Heart left ventricle (tissue), 16 donors: ENCODE measurements at regions of chr5 and their contacts with region 1.

Region 1: DNA sequence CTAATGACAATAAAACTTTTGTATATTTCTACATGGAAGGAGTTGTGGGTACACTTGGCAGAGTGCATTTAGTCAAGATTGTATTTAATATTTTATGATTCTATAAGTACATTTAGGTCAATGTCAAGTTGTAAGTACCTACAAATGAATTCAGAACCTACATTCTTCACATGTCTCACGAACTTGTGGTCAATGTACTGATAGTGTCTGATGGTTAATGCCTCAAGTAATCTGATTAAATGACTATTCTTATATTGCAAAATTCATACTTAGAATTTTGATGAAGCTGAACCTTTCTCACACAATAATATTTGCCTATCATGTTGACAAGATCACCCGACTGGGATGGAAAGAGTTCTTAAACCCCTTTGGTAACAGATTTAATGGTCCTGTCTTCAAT is 444.5 kb downstream of the CTNND2 start:
- DNase-seq: no peak
- ATAC-seq: no peak
- H3K4me3 ChIP-seq: no peak overlapping the region
- H3K27ac ChIP-seq: no peak overlapping the region
- H3K4me1 ChIP-seq: no peaks in the 10 kb centered on the region
- H3K27me3 ChIP-seq: no peaks in the 10 kb centered on the region
- CTCF ChIP-seq: no peak
- POLR2A ChIP-seq: no peak

Region 2: DNA sequence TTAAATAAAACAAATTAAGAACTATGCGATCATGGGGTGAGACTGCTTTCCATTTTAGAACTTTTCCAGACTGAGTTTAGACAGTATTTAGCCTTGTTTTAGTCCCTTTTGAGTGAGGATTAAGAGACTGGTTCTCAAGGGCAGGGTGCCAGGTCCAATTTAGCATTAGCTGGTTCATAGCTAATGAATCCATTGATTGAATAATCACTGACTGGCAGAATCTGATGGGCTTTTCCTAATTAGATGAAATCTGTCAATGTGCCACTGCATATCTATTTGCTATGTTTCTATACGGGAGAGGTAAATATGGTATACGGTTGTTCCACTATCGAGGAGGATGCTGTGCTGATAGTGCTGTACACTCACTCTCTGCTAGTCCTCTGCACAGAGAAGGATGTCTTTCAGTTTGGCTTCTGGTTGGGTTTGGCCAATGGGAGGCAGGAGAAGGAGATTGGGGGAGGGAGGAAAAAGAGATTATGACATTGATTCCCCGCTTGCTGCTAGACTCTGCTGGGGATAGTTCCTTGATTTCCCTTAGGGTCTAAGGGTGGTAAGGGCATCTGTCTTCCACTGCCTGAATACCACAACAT is 52.1 kb before region 1 on chr5:
- intact Hi-C with region 1: no loop called
- DNase-seq: no peak
- ATAC-seq: no peak
- H3K4me3 ChIP-seq: no peak overlapping the region
- H3K27ac ChIP-seq: no peak overlapping the region
- H3K4me1 ChIP-seq: no peaks in the 10 kb centered on the region
- H3K27me3 ChIP-seq: no peaks in the 10 kb centered on the region
- CTCF ChIP-seq: no peak
- POLR2A ChIP-seq: no peak

Region 3: DNA sequence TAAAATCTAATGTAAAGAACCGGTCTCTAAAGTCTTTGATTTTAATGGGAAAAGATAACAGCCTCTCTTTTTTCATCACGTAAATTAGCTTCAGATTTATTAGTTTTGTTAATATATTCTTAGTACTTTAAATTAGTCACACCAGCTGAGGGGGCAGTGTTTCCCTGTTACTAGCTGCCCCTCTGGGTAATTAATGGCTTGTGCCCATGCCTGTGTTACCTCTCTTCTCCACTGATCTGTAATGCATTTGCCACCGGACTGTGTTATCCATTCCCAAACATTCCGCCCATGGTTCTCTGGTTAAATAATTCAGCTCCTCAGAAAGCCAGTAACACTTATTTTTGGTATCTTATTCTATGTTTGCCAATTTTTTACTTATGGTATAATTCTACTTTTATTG is 178.2 kb after region 1 on chr5:
- intact Hi-C with region 1: loop called in 1 of 10 experiments (anchors 5 kb)
- DNase-seq: no peak
- ATAC-seq: no peak
- H3K4me3 ChIP-seq: no peak overlapping the region
- H3K27ac ChIP-seq: no peak overlapping the region
- H3K4me1 ChIP-seq: peaks cover 0 to 9% (median 0%) of the 10 kb centered on the region in 12 donors
- H3K27me3 ChIP-seq: no peaks in the 10 kb centered on the region
- CTCF ChIP-seq: no peak
- POLR2A ChIP-seq: no peak